H1 (cell line): ENCODE measurements at regions of chr10 and their contacts with region 1.

Region 1: DNA sequence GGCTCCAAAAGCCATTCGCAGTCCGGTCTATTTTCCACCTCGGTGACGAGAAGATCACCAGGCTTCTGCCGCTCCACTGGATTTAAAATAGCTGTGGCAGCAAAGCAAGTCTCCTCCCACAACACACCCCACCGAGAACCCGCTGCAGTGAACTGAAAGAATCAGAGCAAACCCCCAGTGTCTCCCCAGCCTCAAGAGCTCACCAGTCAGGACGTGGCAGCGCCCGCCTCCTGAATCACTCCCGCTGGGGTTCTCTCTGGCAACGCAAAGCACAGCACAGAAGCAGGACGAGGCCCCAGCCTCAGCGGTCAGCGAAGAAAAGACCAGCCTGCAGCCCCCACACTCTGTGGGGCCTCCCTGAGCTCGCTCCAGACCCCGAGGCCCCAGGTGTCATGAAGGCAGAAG is 126.1 kb upstream of the PPP2R2D start:
- DNase-seq: peak in 1 of 2 experiments; percentile 38
- H3K4me3 ChIP-seq: no peak overlapping the region
- H3K27ac ChIP-seq: no peak overlapping the region
- H3K4me1 ChIP-seq: peaks cover 0 to 3% (median 0%) of the 10 kb centered on the region in 4 experiments; a peak in 4 of 7 replicates
- H3K27me3 ChIP-seq: no peaks in the 10 kb centered on the region
- CTCF ChIP-seq: no peak
- EP300 ChIP-seq: no peak
- POLR2A ChIP-seq: no peak
- RAD21 ChIP-seq: no peak

Region 2: GRCh38 chr10:131735577-131735976 is 39.1 kb before region 1 on chr10:
- CTCF ChIA-PET with region 1: no interaction called
- POLR2A ChIA-PET with region 1: no interaction called
- DNase-seq: no peak
- H3K4me3 ChIP-seq: no peak overlapping the region
- H3K27ac ChIP-seq: no peak overlapping the region
- H3K4me1 ChIP-seq: no peaks in the 10 kb centered on the region
- H3K27me3 ChIP-seq: no peaks in the 10 kb centered on the region
- CTCF ChIP-seq: no peak
- EP300 ChIP-seq: no peak
- POLR2A ChIP-seq: no peak
- RAD21 ChIP-seq: no peak

Region 3: DNA sequence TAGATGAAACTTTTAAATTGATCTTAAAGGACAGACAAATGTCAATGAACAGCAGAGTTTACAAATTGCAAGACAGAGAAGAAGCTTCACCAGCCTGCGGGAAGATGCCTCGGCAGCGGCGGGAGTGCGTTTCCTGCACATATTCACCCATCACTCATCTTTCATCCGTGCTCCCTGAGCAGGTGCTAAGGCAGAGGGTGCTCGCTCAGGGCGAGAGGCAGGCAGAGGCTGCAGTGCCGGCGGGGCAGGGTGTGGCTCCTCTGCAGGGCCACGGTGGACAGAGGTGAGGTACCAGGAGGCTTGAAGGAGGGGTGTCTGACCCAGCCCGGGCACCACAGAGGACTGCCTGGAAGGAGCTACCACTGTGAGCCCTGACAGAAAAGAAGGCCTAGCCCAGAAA is 29.1 kb before region 1 on chr10:
- CTCF ChIA-PET with region 1: no interaction called
- POLR2A ChIA-PET with region 1: no interaction called
- DNase-seq: no peak
- H3K4me3 ChIP-seq: no peak overlapping the region
- H3K27ac ChIP-seq: no peak overlapping the region
- H3K4me1 ChIP-seq: peaks cover 0 to 20% (median 14%) of the 10 kb centered on the region in 4 experiments; a peak in 6 of 7 replicates
- H3K27me3 ChIP-seq: no peaks in the 10 kb centered on the region
- CTCF ChIP-seq: no peak
- EP300 ChIP-seq: no peak
- POLR2A ChIP-seq: no peak
- RAD21 ChIP-seq: no peak

Region 4: DNA sequence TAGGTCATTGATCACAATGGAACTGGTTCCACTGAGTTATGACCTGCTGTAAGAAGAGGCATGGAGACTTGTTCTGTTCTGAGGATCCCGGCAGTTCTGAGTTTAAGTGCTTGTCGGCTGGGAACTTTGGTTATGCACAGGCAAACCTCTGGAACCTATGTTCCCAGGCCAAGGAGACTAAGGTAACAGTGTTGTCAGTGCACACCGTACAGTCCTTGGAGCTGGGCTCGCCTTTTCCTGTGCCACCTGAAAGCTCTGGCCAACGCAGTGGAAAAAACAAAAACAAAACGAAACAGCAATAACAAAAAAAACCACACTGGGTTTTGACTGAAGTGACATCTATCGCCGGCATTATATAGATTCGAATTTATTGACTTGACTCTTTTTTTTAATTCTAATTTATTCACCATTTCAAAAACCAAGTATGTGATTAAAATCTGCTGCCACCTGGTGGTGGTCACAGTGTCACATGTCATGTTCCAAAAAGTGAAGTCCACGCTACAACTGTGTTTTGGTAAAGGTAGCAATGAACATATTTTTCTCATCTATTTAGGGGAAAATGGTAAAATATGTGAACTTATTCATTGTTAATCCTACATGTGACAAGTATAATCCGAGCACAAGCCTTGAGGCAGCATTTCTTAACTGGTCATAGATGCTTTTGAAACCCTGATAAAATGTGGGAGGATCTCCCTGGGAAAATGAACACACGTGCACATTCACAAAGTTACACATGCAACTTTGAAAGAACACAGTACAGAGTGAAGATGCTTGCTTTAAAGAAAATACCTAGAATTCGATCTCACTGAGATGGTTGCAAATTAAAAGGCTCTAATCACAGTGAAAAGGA is 12.3 kb after region 1 on chr10:
- CTCF ChIA-PET with region 1: interaction called, 29 read pairs
- POLR2A ChIA-PET with region 1: no interaction called
- DNase-seq: no peak
- H3K4me3 ChIP-seq: no peak overlapping the region
- H3K27ac ChIP-seq: no peak overlapping the region
- H3K4me1 ChIP-seq: peaks cover 0 to 7% (median 3%) of the 10 kb centered on the region in 4 experiments; a peak in 4 of 7 replicates
- H3K27me3 ChIP-seq: no peaks in the 10 kb centered on the region; a peak in 1 of 7 replicates
- CTCF ChIP-seq: peak in 2 of 3 experiments; percentile 43 to 56; a peak in 3 of 4 replicates
- EP300 ChIP-seq: no peak
- POLR2A ChIP-seq: no peak
- RAD21 ChIP-seq: peak; percentile 30 to 57; a peak in 3 of 4 replicates

Region 5: GRCh38 chr10:131943021-131943814 is 168.5 kb after region 1 on chr10:
- CTCF ChIA-PET with region 1: no interaction called
- POLR2A ChIA-PET with region 1: no interaction called
- DNase-seq: peak; percentile 29 to 66
- H3K4me3 ChIP-seq: no peak overlapping the region
- H3K27ac ChIP-seq: no peak overlapping the region
- H3K4me1 ChIP-seq: no peaks in the 10 kb centered on the region; a peak in 2 of 7 replicates
- H3K27me3 ChIP-seq: no peaks in the 10 kb centered on the region
- CTCF ChIP-seq: peak; percentile 82 to 93 (median 90)
- EP300 ChIP-seq: no peak
- POLR2A ChIP-seq: no peak
- RAD21 ChIP-seq: peak; percentile 70 to 75